AG04449 (cell line): ENCODE measurements at regions of chr6 and their contacts with region 1.

Region 1: GRCh38 chr6:70221025-70221714 is 81.7 kb downstream of the COL9A1 start:
- DNase-seq: peak; percentile 1
- H3K4me3 ChIP-seq: no peak overlapping the region
- CTCF ChIP-seq: peak; percentile 28

Region 2: DNA sequence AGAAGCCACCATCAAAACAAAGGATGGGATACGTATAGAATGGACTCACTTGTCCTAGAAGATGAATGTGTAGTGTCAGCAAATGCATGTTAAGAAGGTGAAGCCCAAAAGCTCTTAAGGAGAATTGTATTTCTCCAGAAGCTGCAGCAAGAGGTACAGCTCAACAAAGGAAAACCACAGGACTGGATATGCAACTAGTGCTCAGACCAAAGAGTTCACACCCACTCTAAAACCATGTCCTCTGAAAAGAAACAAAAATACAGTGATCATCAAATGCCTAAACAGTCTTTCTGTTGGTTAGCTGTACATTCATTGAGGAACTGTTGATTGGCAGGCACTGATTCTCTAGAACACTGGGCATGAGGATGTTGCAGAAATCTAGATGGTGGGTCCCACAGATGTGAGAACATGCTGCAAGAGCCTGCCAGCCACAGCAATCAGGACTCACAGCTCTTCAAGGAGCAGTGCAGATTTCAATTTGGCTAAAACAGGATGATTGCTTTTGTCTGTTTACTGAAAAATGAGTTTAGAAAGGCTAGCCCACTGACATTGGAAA is 12.9 kb before region 1 on chr6:
- CTCF ChIA-PET with region 1: interaction called, 22 read pairs
- POLR2A ChIA-PET with region 1: interaction called, 5 read pairs
- DNase-seq: no peak
- H3K4me3 ChIP-seq: no peak overlapping the region
- CTCF ChIP-seq: no peak

Region 3: GRCh38 chr6:70231311-70231710 is 10.1 kb after region 1 on chr6:
- CTCF ChIA-PET with region 1: interaction called, 17 read pairs
- POLR2A ChIA-PET with region 1: no interaction called
- DNase-seq: no peak
- H3K4me3 ChIP-seq: no peak overlapping the region
- CTCF ChIP-seq: no peak

Region 4: GRCh38 chr6:70955441-70956190 is 734.4 kb after region 1 on chr6:
- CTCF ChIA-PET with region 1: interaction called, 10 read pairs
- POLR2A ChIA-PET with region 1: no interaction called
- DNase-seq: no peak
- H3K4me3 ChIP-seq: peak overlapping the region; percentile 46
- CTCF ChIP-seq: peak; percentile 98

Region 5: GRCh38 chr6:71012866-71013469 is 791.8 kb after region 1 on chr6:
- CTCF ChIA-PET with region 1: interaction called, 16 read pairs
- POLR2A ChIA-PET with region 1: no interaction called
- DNase-seq: no peak
- H3K4me3 ChIP-seq: no peak overlapping the region
- CTCF ChIP-seq: peak; percentile 66